H1 (cell line): ENCODE measurements at regions of chr2 and their contacts with region 1.

Region 1: DNA sequence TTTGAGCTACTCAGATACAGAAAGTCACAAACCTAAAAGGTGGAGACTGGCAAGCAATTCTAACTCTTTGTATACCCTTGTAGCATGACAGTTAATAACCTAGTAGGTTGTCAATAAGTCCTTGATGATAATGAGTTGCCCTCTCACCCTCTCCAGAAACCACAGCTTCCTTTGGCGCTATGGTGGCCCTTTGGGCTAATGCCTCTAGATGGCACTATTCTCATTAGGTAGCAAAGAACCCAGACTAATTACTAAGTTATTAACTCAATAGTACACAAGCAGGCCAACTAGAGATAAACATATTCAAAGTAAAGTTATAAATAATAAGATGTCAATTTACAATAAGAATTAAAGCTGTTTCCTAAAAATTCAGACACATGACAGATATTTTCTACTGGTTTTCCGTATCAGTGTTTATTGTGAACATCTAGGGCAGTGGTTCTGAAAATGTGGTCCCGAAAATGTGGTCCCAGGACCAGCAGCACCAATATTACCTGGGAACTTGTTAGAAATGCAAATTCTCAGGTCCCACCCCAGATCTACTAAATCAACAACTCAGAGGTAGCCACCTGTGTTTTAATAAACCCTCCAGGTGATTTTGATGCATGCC is 41.1 kb downstream of the LDAH start:
- DNase-seq: peak in 1 of 2 experiments; percentile 48
- H3K4me3 ChIP-seq: no peak overlapping the region
- H3K27ac ChIP-seq: no peak overlapping the region
- H3K4me1 ChIP-seq: no peaks in the 10 kb centered on the region
- H3K27me3 ChIP-seq: no peaks in the 10 kb centered on the region
- CTCF ChIP-seq: peak; percentile 25 to 73 (median 68)
- EP300 ChIP-seq: no peak
- POLR2A ChIP-seq: no peak
- RAD21 ChIP-seq: peak; percentile 75 to 81

Region 2: DNA sequence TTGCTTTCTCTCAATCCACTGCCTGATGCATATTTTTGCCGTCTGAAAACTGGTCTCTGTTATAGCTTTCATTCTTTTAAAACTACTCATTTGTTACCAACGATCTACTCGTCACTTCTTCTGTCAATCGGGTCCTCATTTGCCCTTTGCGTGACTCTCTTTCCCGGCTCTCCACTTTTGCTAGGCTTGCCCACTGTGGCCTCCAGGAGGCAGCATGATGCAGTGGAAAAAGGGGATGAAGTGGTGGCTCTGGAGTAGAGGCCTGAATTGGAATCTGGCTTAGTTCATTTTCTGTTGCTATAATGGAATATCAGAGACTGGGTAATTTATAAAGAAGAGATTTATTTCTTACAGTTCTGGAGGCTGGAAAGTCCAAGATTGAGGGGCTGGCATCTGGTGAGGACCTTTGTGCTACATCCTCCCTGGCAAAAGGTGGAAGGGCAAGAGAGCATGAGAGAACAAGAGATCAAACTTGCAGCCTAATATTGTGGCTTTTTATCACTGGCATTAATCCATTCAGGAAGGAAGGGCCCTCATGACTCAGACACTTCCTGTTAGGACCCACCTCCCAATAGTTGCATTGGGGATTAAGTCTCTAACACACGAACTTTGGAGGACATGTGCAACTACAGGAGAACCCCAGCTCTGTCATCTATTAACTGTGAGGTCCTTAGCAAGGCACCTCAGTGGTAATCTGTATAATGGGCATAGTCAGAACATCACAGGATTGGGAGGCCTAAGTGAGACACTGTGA is 99.4 kb before region 1 on chr2:
- CTCF ChIA-PET with region 1: interaction called, 10 read pairs
- POLR2A ChIA-PET with region 1: no interaction called
- DNase-seq: peak in 1 of 2 experiments; percentile 63
- H3K4me3 ChIP-seq: no peak overlapping the region
- H3K27ac ChIP-seq: no peak overlapping the region
- H3K4me1 ChIP-seq: no peaks in the 10 kb centered on the region; a peak in 1 of 7 replicates
- H3K27me3 ChIP-seq: no peaks in the 10 kb centered on the region
- CTCF ChIP-seq: peak; percentile 75 to 78 (median 77)
- EP300 ChIP-seq: no peak
- POLR2A ChIP-seq: no peak
- RAD21 ChIP-seq: peak; percentile 78 to 82

Region 3: DNA sequence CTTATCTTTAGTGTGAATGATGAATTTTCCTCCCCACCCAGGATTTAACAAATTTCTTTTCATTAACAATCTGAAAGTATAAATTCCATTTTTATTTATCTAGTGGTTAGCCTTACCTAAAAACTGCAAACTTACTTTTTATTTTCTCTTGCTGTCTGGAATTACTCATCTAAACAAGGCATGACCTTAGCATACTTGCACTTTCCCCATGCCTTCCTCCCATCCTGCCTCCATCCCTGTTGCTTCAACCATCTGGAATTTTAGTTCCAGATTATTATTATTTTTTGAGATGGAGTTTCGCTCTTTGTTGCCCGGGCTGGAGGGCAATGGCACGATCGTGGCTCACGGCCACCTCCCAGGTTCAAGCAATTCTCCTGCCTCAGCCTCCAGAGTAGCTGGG is 79.2 kb before region 1 on chr2:
- CTCF ChIA-PET with region 1: no interaction called
- POLR2A ChIA-PET with region 1: no interaction called
- DNase-seq: no peak
- H3K4me3 ChIP-seq: no peak overlapping the region
- H3K27ac ChIP-seq: no peak overlapping the region
- H3K4me1 ChIP-seq: peaks cover 0 to 3% (median 0%) of the 10 kb centered on the region in 4 experiments; a peak in 2 of 7 replicates
- H3K27me3 ChIP-seq: no peaks in the 10 kb centered on the region
- CTCF ChIP-seq: no peak
- EP300 ChIP-seq: no peak
- POLR2A ChIP-seq: no peak
- RAD21 ChIP-seq: no peak

Region 4: DNA sequence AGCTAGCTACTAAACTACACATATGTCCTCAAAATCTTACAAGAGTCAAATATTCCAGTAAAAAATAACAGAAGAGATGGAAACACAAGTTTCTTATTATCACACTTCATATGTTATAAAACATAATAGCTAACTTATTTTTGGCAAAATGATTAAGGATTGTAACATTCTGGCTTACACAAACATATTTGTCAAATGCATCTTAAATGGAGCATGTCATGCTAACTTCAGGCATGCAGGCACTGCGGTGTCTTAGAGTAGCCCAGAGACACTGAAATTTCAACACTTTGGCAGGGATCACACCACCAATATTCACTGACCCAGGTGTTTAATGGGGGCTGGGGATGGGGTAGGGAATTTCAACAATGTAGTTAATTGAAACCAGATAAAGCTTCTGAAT is 10.5 kb before region 1 on chr2:
- CTCF ChIA-PET with region 1: interaction called, 38 read pairs
- POLR2A ChIA-PET with region 1: no interaction called
- DNase-seq: no peak
- H3K4me3 ChIP-seq: no peak overlapping the region
- H3K27ac ChIP-seq: no peak overlapping the region
- H3K4me1 ChIP-seq: no peaks in the 10 kb centered on the region
- H3K27me3 ChIP-seq: no peaks in the 10 kb centered on the region
- CTCF ChIP-seq: no peak
- EP300 ChIP-seq: no peak
- POLR2A ChIP-seq: no peak
- RAD21 ChIP-seq: no peak

Region 5: DNA sequence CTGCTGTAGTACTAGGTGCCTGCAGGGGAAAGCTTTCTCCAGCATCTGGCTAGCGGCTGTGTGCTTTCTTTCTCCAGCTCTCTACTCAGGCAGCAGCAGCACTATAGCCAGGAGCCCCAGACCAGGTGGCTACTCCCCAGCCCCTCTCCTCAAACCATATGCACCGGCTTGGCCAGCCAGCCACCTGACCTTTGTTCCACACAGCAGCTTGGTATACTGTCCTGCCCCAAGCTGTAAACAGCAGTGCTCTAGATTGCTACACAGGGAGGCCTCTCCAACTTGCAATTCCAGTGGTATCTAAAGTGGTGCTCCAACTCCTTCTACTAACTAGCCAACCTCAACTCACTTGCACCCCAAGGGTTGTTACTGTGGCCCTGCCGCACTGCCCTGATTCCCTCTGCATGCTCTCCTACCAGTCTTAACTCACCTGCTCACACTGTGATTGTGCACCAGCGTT is 21.5 kb after region 1 on chr2:
- CTCF ChIA-PET with region 1: interaction called, 22 read pairs
- POLR2A ChIA-PET with region 1: no interaction called
- DNase-seq: no peak
- H3K4me3 ChIP-seq: no peak overlapping the region
- H3K27ac ChIP-seq: no peak overlapping the region
- H3K4me1 ChIP-seq: no peaks in the 10 kb centered on the region
- H3K27me3 ChIP-seq: no peaks in the 10 kb centered on the region
- CTCF ChIP-seq: no peak
- EP300 ChIP-seq: no peak
- POLR2A ChIP-seq: no peak
- RAD21 ChIP-seq: no peak

Region 6: DNA sequence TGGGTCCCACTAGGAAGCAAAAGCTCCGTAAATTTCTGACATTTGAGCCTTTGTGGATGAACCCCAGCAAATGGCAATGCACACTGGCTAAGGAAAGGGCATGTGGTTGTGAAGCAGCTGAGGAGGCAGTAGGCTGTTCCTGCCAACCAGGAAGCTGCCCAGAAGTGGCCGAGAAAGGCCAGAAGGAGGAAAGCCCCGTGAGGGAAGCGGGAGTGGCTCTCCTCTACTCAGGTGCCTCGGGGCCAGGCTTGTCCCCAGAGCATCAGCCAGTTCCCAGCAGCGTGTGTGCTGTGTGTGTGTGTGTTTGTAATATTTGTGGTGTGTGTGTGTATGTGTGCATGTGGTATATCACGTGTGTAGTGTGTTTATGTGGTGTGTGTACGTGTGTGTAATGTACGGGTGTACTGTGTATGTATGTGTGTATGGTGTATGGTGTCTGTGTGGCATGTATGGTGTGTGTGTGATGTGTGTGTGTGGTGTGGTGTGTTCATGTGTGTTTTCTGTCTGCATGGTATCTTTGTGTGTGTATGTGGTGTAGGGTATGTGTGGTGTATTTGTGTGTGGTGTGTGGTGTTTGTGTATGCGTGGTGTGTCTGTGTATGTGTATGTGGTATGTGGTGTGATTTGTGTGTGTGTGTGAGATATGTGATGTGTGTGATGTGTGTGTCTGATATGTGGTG is 171.5 kb after region 1 on chr2:
- CTCF ChIA-PET with region 1: interaction called, 126 read pairs
- POLR2A ChIA-PET with region 1: no interaction called
- DNase-seq: no peak
- H3K4me3 ChIP-seq: no peak overlapping the region
- H3K27ac ChIP-seq: no peak overlapping the region
- H3K4me1 ChIP-seq: no peaks in the 10 kb centered on the region; a peak in 1 of 7 replicates
- H3K27me3 ChIP-seq: no peaks in the 10 kb centered on the region
- CTCF ChIP-seq: no peak
- EP300 ChIP-seq: no peak
- POLR2A ChIP-seq: no peak
- RAD21 ChIP-seq: no peak

Region 7: DNA sequence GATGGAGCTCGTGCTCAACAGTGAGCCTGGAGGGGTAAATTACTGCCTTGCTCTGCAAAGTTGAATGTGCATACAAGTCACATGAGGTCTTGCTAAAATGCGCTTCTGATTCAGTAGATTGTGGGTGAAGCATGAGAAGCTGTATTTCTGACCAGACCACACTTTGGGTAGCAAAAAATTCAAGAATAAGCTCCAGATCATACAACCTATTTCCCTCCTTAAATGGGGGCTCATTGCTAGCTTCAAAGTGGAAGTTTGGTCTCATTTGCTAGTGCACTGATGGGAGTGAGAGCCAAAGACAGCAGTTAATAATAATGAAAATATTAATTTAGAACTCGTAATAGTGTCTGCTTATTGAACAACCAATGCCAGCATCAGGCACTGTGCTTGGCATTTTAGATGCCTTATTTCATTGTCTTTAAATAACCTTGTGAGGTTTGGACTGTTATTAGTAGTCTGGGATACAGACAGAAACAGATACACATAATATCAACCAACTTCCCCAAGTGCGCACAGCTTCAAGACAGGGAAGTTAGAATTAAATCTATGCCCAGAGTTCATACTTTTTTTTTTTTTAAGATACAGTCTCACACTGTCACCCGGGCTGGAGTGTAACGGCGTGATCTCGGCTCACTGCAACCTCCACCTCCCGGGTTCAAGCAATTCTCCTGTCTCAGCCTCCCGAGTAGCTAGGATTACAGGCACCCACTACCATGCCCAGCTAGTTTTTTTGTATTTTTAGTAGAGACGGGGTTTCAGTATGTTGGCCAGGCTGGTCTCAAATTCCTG is 244.1 kb after region 1 on chr2:
- CTCF ChIA-PET with region 1: interaction called, 21 read pairs
- POLR2A ChIA-PET with region 1: no interaction called
- DNase-seq: no peak
- H3K4me3 ChIP-seq: no peak overlapping the region
- H3K27ac ChIP-seq: no peak overlapping the region
- H3K4me1 ChIP-seq: no peaks in the 10 kb centered on the region
- H3K27me3 ChIP-seq: no peaks in the 10 kb centered on the region
- CTCF ChIP-seq: no peak
- EP300 ChIP-seq: no peak
- POLR2A ChIP-seq: no peak
- RAD21 ChIP-seq: no peak

Region 8: DNA sequence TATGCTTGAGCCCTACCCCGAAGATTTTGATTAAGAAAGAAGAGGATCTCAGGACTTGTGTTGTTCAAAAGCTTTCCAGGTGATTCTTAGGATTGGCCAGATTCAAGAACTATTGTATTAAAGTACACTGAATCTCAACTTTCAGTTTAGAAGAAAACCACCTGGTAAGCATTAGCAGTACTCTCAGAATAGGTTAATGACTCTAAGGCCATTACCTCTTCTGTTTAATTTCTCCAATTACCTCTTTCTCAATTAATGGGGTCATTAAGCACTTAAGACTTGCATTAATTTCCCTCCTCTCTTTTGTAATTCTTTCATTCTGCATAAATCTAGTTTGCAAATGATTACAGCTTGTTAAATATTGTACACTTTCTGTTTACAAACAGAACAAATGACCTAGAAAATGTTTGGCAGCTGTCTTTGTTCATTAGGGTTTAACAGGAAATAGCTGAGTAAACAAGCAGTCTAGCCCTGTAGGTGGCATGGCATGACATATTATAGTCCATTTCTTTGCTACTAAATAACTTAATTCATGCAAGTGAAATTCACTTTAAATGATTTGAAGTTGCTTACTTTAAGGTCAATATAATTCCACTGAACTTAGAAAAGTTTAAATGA is 321.6 kb after region 1 on chr2:
- CTCF ChIA-PET with region 1: no interaction called
- POLR2A ChIA-PET with region 1: no interaction called
- DNase-seq: no peak
- H3K4me3 ChIP-seq: no peak overlapping the region
- H3K27ac ChIP-seq: no peak overlapping the region
- H3K4me1 ChIP-seq: peaks cover 0 to 3% (median 1%) of the 10 kb centered on the region in 4 experiments; a peak in 4 of 7 replicates
- H3K27me3 ChIP-seq: no peaks in the 10 kb centered on the region
- CTCF ChIP-seq: no peak
- EP300 ChIP-seq: no peak
- POLR2A ChIP-seq: no peak
- RAD21 ChIP-seq: no peak